Spleen (tissue), 13 donors: ENCODE measurements at regions of chr1 and their contacts with region 1.

Region 1: DNA sequence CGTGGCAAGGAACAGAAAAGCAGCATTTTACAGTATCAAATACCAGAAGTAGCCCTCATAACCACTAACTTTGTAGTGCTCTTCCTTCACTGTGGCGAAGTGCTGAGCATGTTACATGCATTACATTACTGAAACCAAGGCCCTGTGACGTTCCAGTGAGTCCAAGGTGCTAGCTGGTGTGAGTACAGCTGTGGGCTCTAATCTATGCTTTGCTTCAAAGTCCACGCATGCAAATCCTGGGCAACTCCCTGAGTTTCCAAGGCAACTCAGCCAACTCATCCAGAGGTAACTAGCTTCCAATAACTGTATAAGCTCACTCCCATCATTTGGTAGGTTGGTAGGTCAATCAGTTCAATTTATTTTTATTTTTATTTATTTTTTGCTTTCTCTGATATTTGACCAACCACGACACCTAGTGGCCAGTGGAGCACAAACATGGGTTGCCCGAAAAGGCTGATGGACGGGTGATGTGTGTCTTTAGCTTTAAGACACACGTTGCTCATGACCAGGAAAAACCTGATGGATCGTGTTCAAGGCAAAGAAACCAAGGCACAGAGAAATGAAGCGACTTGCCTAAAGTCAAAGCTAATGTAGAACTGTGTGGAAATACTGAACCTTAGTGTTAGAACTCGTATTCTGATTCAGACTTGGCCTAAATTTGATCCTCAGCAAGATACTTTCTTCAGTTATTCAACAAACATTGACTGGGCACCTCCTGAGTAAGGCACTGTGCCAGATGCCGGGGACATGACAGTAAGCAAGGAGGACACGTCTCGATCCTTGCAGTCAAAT is 73.0 kb downstream of the GNG12 start:
- DNase-seq: no peak
- H3K4me3 ChIP-seq: no peak overlapping the region
- H3K27ac ChIP-seq: peak overlapping the region in 3 of 8 donors; percentile 15 to 36 (median 22)
- H3K4me1 ChIP-seq: peaks cover 0 to 24% (median 15%) of the 10 kb centered on the region in 6 donors
- H3K27me3 ChIP-seq: peaks cover 0 to 14% (median 0%) of the 10 kb centered on the region in 7 donors
- CTCF ChIP-seq: peak; percentile 76 to 93 (median 86)
- POLR2A ChIP-seq: no peak

Region 2: GRCh38 chr1:67561704-67562113 is 198.5 kb before region 1 on chr1:
- intact Hi-C with region 1: loop called (anchors 5 kb)
- DNase-seq: peak; percentile 95
- H3K4me3 ChIP-seq: no peak overlapping the region
- H3K27ac ChIP-seq: peak overlapping the region in 4 of 8 donors; percentile 55 to 82 (median 80)
- H3K4me1 ChIP-seq: peaks cover 10 to 47% (median 20%) of the 10 kb centered on the region in 6 donors
- H3K27me3 ChIP-seq: peaks cover 0 to 14% (median 0%) of the 10 kb centered on the region in 7 donors
- CTCF ChIP-seq: peak; percentile 51 to 87 (median 75)
- POLR2A ChIP-seq: no peak

Region 3: GRCh38 chr1:67646145-67647035 is 113.8 kb before region 1 on chr1:
- intact Hi-C with region 1: no loop called
- DNase-seq: no peak
- H3K4me3 ChIP-seq: no peak overlapping the region
- H3K27ac ChIP-seq: no peak overlapping the region
- H3K4me1 ChIP-seq: peaks cover 6 to 16% (median 12%) of the 10 kb centered on the region in 6 donors
- H3K27me3 ChIP-seq: no peaks in the 10 kb centered on the region
- CTCF ChIP-seq: no peak
- POLR2A ChIP-seq: no peak

Region 4: DNA sequence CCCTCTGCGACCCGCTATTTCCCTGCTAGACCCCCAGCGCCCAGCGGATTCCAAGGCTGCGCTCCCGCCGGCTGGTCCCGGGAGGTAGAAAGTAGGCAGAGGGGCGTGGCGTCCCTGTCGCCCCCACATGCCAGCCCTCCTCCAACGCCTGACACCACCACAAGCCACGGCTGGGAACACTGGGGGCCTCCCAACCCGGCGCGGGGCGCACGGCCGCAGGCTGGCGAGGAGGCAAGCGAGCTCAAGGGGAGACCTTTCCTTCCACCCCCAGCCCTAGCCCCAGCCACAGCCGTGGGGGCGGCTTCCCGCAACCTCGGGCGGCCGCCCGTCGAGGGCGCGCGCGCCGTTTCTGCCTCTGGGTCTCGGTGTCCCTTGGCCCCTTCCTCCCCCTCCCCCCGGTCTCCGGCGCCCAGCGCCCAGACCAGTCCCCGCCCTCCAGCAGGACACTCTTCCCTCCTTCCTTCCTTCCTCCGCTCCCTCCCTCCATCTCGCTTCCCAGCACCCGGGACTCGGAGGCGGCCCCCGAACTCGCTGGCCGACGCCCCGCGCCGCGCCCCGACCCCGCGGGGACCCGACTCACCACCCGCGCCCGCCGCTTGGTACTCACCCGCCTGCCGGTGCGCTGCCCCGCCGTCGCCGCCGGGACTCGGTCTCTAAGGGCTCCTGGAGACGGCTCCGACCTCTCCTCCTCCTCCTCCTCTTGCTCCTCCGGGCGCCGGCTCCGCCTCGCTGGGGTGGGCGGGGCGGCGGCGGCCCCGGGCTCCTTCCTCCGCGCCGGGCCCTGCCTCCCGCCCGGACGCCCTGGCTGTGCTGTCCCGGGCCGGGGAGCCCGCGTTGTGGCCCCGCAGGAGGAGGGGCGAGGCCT is 72.7 kb after region 1 on chr1 and contains the start of gene GNG12:
- intact Hi-C with region 1: loop called (anchors 10 kb)
- DNase-seq: peak; percentile 82
- H3K4me3 ChIP-seq: peak within 1 kb of the TSS; percentile 52 to 79 (median 60)
- H3K27ac ChIP-seq: peak within 1 kb of the TSS; percentile 73 to 89 (median 87)
- H3K4me1 ChIP-seq: peaks cover 0 to 51% (median 28%) of the 10 kb centered on the region in 6 donors
- H3K27me3 ChIP-seq: peaks cover 0 to 75% (median 24%) of the 10 kb centered on the region in 7 donors
- CTCF ChIP-seq: no peak
- POLR2A ChIP-seq: peak in 1 of 3 donors; percentile 23
- total RNA-seq, gene GNG12: 52.3 to 102 (median 88.0) TPM

Region 5: GRCh38 chr1:69246710-69247109 is 1486.5 kb after region 1 on chr1:
- intact Hi-C with region 1: no loop called
- DNase-seq: no peak
- H3K4me3 ChIP-seq: no peak overlapping the region
- H3K27ac ChIP-seq: no peak overlapping the region
- H3K4me1 ChIP-seq: no peaks in the 10 kb centered on the region
- H3K27me3 ChIP-seq: no peaks in the 10 kb centered on the region
- CTCF ChIP-seq: no peak
- POLR2A ChIP-seq: no peak